ENCODE measurements at regions of chr12 and their contacts with region 1.

Region 1: GRCh38 chr12:27014085-27014858 is at the start of gene TM7SF3:
- DNase-seq: peak in 1 of 2 donors; percentile 90
- H3K4me3 ChIP-seq: peak within 1 kb of the TSS; percentile 84 to 99
- H3K27ac ChIP-seq: peak within 1 kb of the TSS; percentile 91
- H3K4me1 ChIP-seq: peaks cover 62% of the 10 kb centered on the region
- H3K27me3 ChIP-seq: no peaks in the 10 kb centered on the region
- CTCF ChIP-seq: peak; percentile 90 to 97 (median 92)
- POLR2A ChIP-seq: peak in 1 of 2 donors; percentile 41
- total RNA-seq, gene TM7SF3: 65.3 TPM

Region 2: DNA sequence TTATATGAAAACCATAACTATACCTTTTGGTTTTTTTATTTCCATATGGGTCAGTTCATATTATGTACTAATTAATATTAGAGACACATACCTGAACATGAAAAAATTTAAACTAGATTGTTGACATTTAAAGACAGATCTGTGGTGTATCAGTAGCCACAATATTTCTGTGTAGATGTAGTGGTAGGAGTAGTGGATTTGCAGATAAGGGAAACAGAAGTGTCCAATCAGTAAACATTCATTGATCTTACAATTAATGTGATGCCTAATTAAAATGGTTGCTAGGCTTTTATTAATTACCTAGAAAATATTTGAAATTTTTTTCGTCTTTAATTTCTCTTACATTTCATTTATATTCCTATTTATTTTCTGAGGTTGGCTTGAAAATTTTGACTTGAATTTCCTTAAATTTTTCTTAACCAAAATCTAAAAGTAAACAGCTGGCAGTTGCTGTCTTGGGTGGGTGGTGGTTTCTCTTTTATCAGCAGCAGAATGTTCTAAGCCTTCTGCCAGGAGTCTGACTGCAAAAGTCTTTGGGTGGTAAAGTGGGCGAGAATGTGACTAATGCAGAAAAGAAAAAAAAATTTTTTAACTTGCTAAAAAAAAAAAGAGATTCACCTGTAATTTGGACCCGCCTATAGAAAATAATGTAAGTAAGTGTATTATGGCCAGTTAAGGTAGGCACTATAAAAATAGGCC is 73.6 kb before region 1 on chr12:
- intact Hi-C with region 1: loop called (anchors 5 kb)
- DNase-seq: no peak
- H3K4me3 ChIP-seq: no peak overlapping the region
- H3K27ac ChIP-seq: no peak overlapping the region
- H3K4me1 ChIP-seq: peaks cover 49% of the 10 kb centered on the region
- H3K27me3 ChIP-seq: no peaks in the 10 kb centered on the region
- CTCF ChIP-seq: no peak
- POLR2A ChIP-seq: no peak

Measured in vagina (tissue), 2 donors.